WTC11 (cell line): ENCODE measurements at regions of chr17 and their contacts with region 1.

Region 1: GRCh38 chr17:49290690-49291359 is 60.2 kb upstream of the PHOSPHO1 start:
- DNase-seq: no peak
- ATAC-seq: peak; percentile 41
- H3K4me3 Mint-ChIP-seq: no peak overlapping the region
- H3K27ac Mint-ChIP-seq: no peak overlapping the region
- H3K4me1 Mint-ChIP-seq: no peaks in the 10 kb centered on the region; the same call in 1 of the 2 replicates
- H3K27me3 Mint-ChIP-seq: no peaks in the 10 kb centered on the region
- CTCF ChIP-seq: peak; percentile 28; the same call in 1 of the 2 replicates

Region 2: GRCh38 chr17:49180303-49180702 is 110.5 kb before region 1 on chr17:
- CTCF ChIA-PET with region 1: interaction called, 10 read pairs
- POLR2A ChIA-PET with region 1: no interaction called
- DNase-seq: peak; percentile 80
- ATAC-seq: peak; percentile 90
- H3K4me3 Mint-ChIP-seq: no peak overlapping the region
- H3K27ac Mint-ChIP-seq: no peak overlapping the region
- H3K4me1 Mint-ChIP-seq: no peaks in the 10 kb centered on the region
- H3K27me3 Mint-ChIP-seq: peaks cover 8% of the 10 kb centered on the region
- CTCF ChIP-seq: peak; percentile 73

Region 3: GRCh38 chr17:49230636-49231562 is 59.9 kb before region 1 on chr17 and contains the start of gene PHOSPHO1:
- CTCF ChIA-PET with region 1: interaction called, 30 read pairs
- POLR2A ChIA-PET with region 1: no interaction called
- DNase-seq: peak; percentile 94
- ATAC-seq: peak; percentile 89
- H3K4me3 Mint-ChIP-seq: peak within 1 kb of the TSS; percentile 85
- H3K27ac Mint-ChIP-seq: no peak within 1 kb of the TSS
- H3K4me1 Mint-ChIP-seq: peaks cover 25% of the 10 kb centered on the region
- H3K27me3 Mint-ChIP-seq: peaks cover 70% of the 10 kb centered on the region
- CTCF ChIP-seq: no peak
- total RNA-seq, gene PHOSPHO1: 0.81 to 1.1 TPM (median 0.85 TPM) in 3 replicates

Region 4: GRCh38 chr17:49260011-49260921 is 30.6 kb before region 1 on chr17:
- CTCF ChIA-PET with region 1: interaction called, 12 read pairs
- POLR2A ChIA-PET with region 1: no interaction called
- DNase-seq: peak; percentile 48
- ATAC-seq: peak; percentile 75
- H3K4me3 Mint-ChIP-seq: peak overlapping the region; percentile 80
- H3K27ac Mint-ChIP-seq: no peak overlapping the region
- H3K4me1 Mint-ChIP-seq: peaks cover 8% of the 10 kb centered on the region
- H3K27me3 Mint-ChIP-seq: peaks cover 27% of the 10 kb centered on the region
- CTCF ChIP-seq: no peak

Region 5: DNA sequence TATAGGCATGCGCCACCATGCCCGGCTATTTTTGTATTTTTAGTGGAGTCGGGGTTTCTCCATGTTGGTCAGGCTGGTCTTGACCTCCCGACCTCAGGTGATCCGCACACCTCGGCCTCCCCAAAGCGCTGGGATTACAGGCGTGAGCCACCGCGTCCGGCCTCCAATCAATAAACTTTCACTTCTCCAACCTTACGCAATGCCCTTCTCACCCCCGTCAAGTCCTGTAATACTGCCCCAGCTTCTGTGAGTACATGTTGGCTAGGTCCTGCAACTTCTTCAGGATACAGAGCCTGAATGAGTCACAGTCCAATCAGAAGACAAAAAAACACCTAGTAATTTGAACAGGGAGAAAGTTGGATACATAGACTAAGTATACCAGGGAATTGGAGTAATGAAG is 13.2 kb before region 1 on chr17:
- CTCF ChIA-PET with region 1: interaction called, 29 read pairs
- POLR2A ChIA-PET with region 1: no interaction called
- DNase-seq: no peak
- ATAC-seq: no peak
- H3K4me3 Mint-ChIP-seq: no peak overlapping the region
- H3K27ac Mint-ChIP-seq: peak overlapping the region; percentile 5; the same call in 1 of the 2 replicates
- H3K4me1 Mint-ChIP-seq: peaks cover 23% of the 10 kb centered on the region
- H3K27me3 Mint-ChIP-seq: no peaks in the 10 kb centered on the region; the same call in 1 of the 2 replicates
- CTCF ChIP-seq: no peak

Region 6: DNA sequence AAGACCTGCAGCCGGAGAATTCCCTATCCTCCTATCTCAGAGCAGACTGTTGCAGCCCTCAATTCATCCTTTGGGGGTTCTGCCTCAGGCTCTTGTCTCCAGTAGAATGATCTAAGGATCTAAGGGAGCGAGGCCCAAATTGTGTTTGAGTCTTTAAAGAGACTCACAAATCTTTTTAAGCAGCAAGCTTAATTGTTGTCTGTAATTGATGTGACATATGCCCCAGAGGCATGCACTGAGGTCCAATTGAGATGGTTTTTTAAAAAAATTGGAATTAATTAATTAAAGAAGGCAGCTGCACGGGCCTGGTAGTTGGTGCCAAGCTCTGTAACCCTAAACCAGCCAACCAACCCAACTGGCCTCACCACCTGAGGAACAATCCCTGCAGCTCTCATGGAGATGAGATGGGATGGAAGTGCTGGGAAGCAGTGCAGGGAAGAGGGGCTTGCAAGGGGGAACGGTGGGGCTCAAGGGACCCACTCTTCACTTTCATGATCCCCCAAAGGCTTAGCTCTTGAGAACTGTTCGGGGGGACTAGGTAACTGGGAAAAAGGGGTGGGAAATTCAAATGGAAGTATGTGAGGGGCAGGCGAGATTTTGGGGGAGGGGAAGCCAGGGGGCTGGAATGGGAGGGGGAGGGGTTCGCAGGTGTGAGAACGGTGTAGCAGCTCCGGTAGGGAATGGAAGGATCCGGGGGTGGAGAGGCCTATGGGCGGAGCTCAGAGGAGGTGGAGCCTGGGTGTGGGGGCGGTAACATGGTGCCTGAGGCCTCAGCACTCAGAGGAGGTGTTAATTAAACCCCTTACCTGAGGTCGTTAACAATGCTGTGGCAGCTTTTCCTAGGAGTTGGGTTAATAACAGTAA is 80.4 kb after region 1 on chr17:
- CTCF ChIA-PET with region 1: interaction called, 12 read pairs
- POLR2A ChIA-PET with region 1: no interaction called
- DNase-seq: peak; percentile 95
- ATAC-seq: peak; percentile 99
- H3K4me3 Mint-ChIP-seq: peak overlapping the region; percentile 24; the same call in 1 of the 2 replicates
- H3K27ac Mint-ChIP-seq: peak overlapping the region; percentile 94
- H3K4me1 Mint-ChIP-seq: peaks cover 50% of the 10 kb centered on the region
- H3K27me3 Mint-ChIP-seq: no peaks in the 10 kb centered on the region
- CTCF ChIP-seq: no peak